PC-3 (cell line): ENCODE measurements at regions of chr11 and their contacts with region 1.

Region 1: GRCh38 chr11:65117216-65118096 is at the start of gene ZNHIT2:
- DNase-seq: peak; percentile 100
- ATAC-seq: peak; percentile 59
- H3K4me3 ChIP-seq: peak within 1 kb of the TSS; percentile 77
- H3K27ac ChIP-seq: peak within 1 kb of the TSS; percentile 74
- H3K4me1 ChIP-seq: peaks cover 30% of the 10 kb centered on the region
- H3K27me3 ChIP-seq: no peaks in the 10 kb centered on the region
- CTCF ChIP-seq: peak; percentile 97
- total RNA-seq, gene ZNHIT2: 48.2 and 59.0 TPM in 2 replicates

Region 2: GRCh38 chr11:64947208-64947814 is 170.1 kb before region 1 on chr11:
- CTCF ChIA-PET with region 1: no interaction called
- POLR2A ChIA-PET with region 1: no interaction called
- intact Hi-C with region 1: no loop called
- DNase-seq: no peak
- ATAC-seq: peak; percentile 49
- H3K4me3 ChIP-seq: no peak overlapping the region
- H3K27ac ChIP-seq: no peak overlapping the region
- H3K4me1 ChIP-seq: no peaks in the 10 kb centered on the region
- H3K27me3 ChIP-seq: no peaks in the 10 kb centered on the region
- CTCF ChIP-seq: no peak

Region 3: DNA sequence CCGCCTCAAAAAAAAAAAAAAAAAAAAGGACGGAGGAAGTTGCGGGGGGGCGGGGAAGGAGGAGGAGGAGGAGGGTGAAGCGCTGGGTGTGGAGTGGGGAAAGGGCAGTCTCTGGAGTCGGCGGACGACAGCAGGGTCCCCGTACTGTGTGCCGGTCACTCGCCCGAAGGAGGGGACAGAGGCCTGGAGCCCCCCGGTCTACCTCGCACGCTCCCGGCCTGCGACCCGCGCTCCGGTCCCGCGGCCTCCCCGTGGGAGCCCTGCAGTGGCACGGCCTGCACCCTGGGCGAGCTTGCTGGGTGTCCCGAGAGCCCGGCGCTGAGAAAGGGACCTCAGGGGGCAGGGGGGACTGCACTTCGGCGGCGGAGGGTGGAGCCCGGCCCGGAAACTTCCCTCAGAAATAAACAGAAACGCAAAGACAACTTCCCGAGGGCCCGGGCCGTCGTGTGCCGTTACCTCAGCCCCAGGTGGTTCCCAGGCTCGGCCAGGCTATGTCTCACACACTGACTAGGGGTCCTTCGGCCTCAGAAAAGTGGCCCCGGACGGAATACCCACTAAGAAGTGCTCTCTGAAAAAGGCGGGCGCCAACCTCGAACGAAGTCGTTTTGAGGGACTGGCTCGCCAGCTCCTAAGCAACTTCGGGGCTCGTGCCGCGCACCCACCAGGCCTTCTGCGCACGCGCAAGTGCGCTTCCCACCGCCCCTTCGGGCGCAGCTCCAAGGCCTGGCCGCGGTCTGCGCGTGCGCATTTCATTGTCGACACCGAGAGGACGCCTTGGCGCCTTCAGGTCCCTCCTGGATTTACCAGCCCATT is 145.8 kb before region 1 on chr11 and contains the start of gene MAJIN:
- CTCF ChIA-PET with region 1: no interaction called
- POLR2A ChIA-PET with region 1: interaction called, 18 read pairs
- intact Hi-C with region 1: no loop called
- DNase-seq: peak; percentile 30
- ATAC-seq: no peak
- H3K4me3 ChIP-seq: no peak within 1 kb of the TSS
- H3K27ac ChIP-seq: peak within 1 kb of the TSS; percentile 44
- H3K4me1 ChIP-seq: peaks cover 24% of the 10 kb centered on the region
- H3K27me3 ChIP-seq: no peaks in the 10 kb centered on the region
- CTCF ChIP-seq: no peak
- total RNA-seq, gene MAJIN: not detected in 2 replicates

Region 4: DNA sequence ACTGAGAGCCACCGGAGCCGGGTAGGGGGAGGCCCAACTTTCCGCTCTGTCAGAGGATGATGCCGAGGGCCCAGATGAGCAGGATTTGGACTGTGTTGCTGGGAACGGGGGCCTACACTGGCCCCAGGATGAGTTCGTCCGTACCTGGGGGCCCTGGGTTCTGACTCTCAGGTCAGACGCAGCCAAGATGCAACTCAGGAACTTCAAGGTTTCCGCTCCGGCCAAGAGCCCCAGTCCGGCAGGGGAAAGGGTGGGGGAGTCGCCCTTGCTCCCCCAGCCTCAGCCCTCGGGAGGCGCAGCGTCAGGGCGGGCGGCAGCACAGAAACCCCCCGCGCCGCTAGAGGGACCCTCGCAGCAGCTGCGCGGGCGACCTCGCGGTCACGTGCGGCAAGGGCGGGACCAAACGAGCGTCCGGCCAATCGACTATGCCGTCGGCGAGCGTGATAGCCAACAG is 103.7 kb before region 1 on chr11:
- CTCF ChIA-PET with region 1: no interaction called
- POLR2A ChIA-PET with region 1: no interaction called
- intact Hi-C with region 1: loop called (anchors 1 kb)
- DNase-seq: peak; percentile 89
- ATAC-seq: peak; percentile 84
- H3K4me3 ChIP-seq: peak overlapping the region; percentile 74
- H3K27ac ChIP-seq: peak overlapping the region; percentile 72
- H3K4me1 ChIP-seq: peaks cover 14% of the 10 kb centered on the region
- H3K27me3 ChIP-seq: no peaks in the 10 kb centered on the region
- CTCF ChIP-seq: peak; percentile 58

Region 5: GRCh38 chr11:65095974-65096806 is 21.3 kb before region 1 on chr11 and contains the start of gene VPS51:
- CTCF ChIA-PET with region 1: no interaction called
- POLR2A ChIA-PET with region 1: interaction called, 3 read pairs
- intact Hi-C with region 1: loop called (anchors 2 kb)
- DNase-seq: peak; percentile 92
- ATAC-seq: peak; percentile 98
- H3K4me3 ChIP-seq: peak within 1 kb of the TSS; percentile 84
- H3K27ac ChIP-seq: peak within 1 kb of the TSS; percentile 63
- H3K4me1 ChIP-seq: peaks cover 13% of the 10 kb centered on the region
- H3K27me3 ChIP-seq: no peaks in the 10 kb centered on the region
- CTCF ChIP-seq: no peak
- total RNA-seq, gene VPS51: 414 and 743 TPM in 2 replicates

Region 6: GRCh38 chr11:65134386-65135253 is 17.2 kb after region 1 on chr11 and contains the start of gene SYVN1:
- CTCF ChIA-PET with region 1: interaction called, 3 read pairs
- POLR2A ChIA-PET with region 1: interaction called, 24 read pairs
- intact Hi-C with region 1: loop called (anchors 1 kb)
- DNase-seq: peak; percentile 99
- ATAC-seq: peak; percentile 91
- H3K4me3 ChIP-seq: peak within 1 kb of the TSS; percentile 90
- H3K27ac ChIP-seq: peak within 1 kb of the TSS; percentile 95
- H3K4me1 ChIP-seq: peaks cover 16% of the 10 kb centered on the region
- H3K27me3 ChIP-seq: no peaks in the 10 kb centered on the region
- CTCF ChIP-seq: no peak
- total RNA-seq, gene SYVN1: 22.3 and 33.2 TPM in 2 replicates

Region 7: GRCh38 chr11:65180877-65181568 is 63.6 kb after region 1 on chr11:
- CTCF ChIA-PET with region 1: no interaction called
- POLR2A ChIA-PET with region 1: no interaction called
- intact Hi-C with region 1: loop called (anchors 2 kb)
- DNase-seq: peak; percentile 72
- ATAC-seq: peak; percentile 57
- H3K4me3 ChIP-seq: peak overlapping the region; percentile 92
- H3K27ac ChIP-seq: peak overlapping the region; percentile 47
- H3K4me1 ChIP-seq: peaks cover 27% of the 10 kb centered on the region
- H3K27me3 ChIP-seq: no peaks in the 10 kb centered on the region
- CTCF ChIP-seq: peak; percentile 82

Region 8: GRCh38 chr11:65251476-65251875 is 134.0 kb after region 1 on chr11:
- CTCF ChIA-PET with region 1: interaction called, 5 read pairs
- POLR2A ChIA-PET with region 1: no interaction called
- intact Hi-C with region 1: loop called (anchors 2 kb)
- DNase-seq: peak; percentile 19
- ATAC-seq: no peak
- H3K4me3 ChIP-seq: no peak overlapping the region
- H3K27ac ChIP-seq: no peak overlapping the region
- H3K4me1 ChIP-seq: no peaks in the 10 kb centered on the region; the same call in 1 of the 2 replicates
- H3K27me3 ChIP-seq: no peaks in the 10 kb centered on the region
- CTCF ChIP-seq: no peak